Endothelial cell of umbilical vein (primary cell): ENCODE measurements at regions of chr17 and their contacts with region 1.

Region 1: DNA sequence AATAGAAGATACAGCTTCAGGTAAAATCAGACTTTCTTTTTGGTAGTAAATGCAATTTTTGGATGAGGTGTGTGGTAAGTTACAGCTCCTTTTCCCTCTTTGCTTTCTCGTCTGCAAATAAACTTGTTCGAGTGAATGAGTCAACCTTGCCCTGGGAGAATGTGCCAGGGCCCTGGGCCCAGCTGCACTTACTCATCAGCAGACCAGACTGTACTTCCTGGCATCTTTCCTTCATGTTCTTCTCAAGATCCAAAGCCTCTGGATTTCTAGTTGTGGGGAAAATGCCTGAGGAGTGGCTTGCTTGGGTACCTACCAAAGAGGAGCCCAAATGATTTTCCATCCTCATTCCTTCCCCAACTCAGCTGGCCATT is 5.4 kb upstream of the G6PC1 start:
- DNase-seq: peak; percentile 88
- H3K4me3 ChIP-seq: no peak overlapping the region
- H3K27ac ChIP-seq: peak overlapping the region; percentile 81
- H3K4me1 ChIP-seq: peaks cover 25% of the 10 kb centered on the region
- H3K27me3 ChIP-seq: no peaks in the 10 kb centered on the region
- CTCF ChIP-seq: no peak
- POLR2A ChIP-seq: no peak

Region 2: DNA sequence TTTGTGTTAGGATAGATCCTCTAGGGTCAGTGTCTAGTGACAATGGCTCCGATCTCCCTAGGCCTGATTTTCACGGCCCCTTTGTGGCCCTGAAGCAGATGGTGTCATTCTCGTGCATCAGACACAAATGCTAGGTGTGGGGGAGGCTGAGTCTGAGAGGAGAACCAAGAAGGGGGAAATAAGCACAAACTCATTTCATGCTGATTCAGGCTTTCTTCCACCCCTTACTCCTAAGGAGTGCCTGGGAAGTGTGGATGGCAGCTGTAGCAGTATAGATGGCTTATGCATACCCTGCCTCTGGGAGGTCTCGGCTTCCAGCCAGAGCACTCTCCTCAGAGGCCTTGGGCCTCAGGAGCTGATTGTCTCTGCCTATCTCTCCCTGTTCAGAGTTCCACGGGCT is 116.6 kb before region 1 on chr17:
- CTCF ChIA-PET with region 1: no interaction called
- POLR2A ChIA-PET with region 1: no interaction called
- dilution Hi-C with region 1: no loop called
- intact Hi-C with region 1: no loop called
- DNase-seq: no peak
- H3K4me3 ChIP-seq: no peak overlapping the region
- H3K27ac ChIP-seq: no peak overlapping the region
- H3K4me1 ChIP-seq: peaks cover 45% of the 10 kb centered on the region
- H3K27me3 ChIP-seq: peaks cover 3 to 7% of the 10 kb centered on the region in 2 experiments
- CTCF ChIP-seq: no peak
- POLR2A ChIP-seq: no peak

Region 3: GRCh38 chr17:42920922-42921321 is 25.8 kb after region 1 on chr17:
- CTCF ChIA-PET with region 1: interaction called, 4 read pairs
- POLR2A ChIA-PET with region 1: no interaction called
- dilution Hi-C with region 1: no loop called
- intact Hi-C with region 1: loop called (anchors 2 kb)
- DNase-seq: peak; percentile 92
- H3K4me3 ChIP-seq: no peak overlapping the region
- H3K27ac ChIP-seq: no peak overlapping the region
- H3K4me1 ChIP-seq: peaks cover 10% of the 10 kb centered on the region
- H3K27me3 ChIP-seq: peaks cover 3 to 5% of the 10 kb centered on the region in 2 experiments
- CTCF ChIP-seq: no peak
- POLR2A ChIP-seq: no peak

Region 4: DNA sequence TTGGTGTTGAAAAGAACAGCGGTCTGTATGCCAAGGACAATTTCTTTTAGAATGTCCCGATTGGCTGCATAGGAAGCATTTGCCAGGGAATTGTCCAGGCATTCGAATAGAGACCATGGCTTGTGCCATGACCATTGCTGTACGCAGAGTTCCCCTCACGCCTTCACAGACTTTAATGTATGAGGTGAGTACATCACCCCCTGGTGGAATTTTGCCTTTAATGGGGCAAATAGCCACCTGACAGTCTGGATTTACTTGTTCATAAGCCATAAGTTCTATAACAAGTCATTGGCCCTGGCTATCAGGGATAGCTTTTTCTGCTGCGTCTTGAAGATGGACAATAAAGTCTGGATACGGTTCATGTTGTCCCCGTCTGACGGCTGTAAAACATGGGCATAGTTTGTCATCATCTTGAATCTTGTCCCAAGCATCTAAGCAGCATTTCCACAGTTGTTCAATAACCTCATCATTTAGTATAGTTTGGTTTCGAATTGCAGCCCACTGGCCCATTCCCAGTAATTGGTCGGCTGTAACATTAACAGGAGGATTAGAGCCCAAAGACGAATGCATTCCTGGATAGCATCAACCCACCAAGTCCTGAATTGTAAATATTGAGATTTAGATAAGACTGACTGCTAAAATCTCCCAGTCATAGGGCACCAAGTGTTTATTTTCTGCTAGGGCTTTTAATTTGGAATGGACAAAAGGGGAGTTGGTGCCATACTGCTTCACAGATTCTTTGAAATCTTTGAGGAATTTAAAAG is 435.9 kb after region 1 on chr17:
- CTCF ChIA-PET with region 1: no interaction called
- POLR2A ChIA-PET with region 1: no interaction called
- dilution Hi-C with region 1: no loop called
- intact Hi-C with region 1: no loop called
- DNase-seq: peak; percentile 17
- H3K4me3 ChIP-seq: no peak overlapping the region
- H3K27ac ChIP-seq: no peak overlapping the region
- H3K4me1 ChIP-seq: no peaks in the 10 kb centered on the region
- H3K27me3 ChIP-seq: no peaks in the 10 kb centered on the region
- CTCF ChIP-seq: peak in 1 of 2 donors; percentile 5
- POLR2A ChIP-seq: no peak